Prostate gland (tissue), 2 donors: ENCODE measurements at regions of chr12 and their contacts with region 1.

Region 1: DNA sequence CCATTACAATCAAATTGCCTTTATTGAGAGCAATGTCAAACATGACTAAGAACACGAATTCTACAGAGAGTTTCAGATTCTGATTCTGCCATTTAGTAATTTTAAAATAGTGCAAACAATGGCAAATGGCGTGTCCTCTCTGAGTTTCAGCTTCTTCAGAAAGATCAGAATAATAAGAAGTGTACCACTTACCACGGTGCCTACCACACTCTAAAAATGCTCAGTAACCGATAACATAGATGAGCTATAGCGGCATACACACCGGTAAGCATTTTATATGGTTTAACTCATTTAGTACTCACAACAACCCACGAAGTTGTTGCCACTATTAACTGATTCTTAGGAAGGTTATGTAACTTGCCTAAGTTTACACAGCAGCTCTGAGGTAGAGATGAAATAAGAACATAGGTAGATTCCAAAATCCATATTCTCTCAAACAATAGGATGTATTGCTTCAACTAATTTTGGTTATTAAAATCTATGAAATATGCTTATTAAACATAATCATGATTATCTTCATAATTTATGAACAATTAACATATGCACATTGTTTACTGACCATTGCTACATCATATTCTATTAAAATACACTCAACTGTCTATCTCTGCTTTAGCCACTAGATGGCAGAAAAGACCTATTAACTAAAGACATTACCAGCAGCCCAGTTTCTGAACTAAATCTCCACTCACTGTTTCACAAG is 38.3 kb downstream of the SLC6A15 start:
- DNase-seq: no peak
- H3K4me3 ChIP-seq: no peak overlapping the region
- H3K27ac ChIP-seq: no peak overlapping the region
- H3K4me1 ChIP-seq: no peaks in the 10 kb centered on the region
- H3K27me3 ChIP-seq: no peaks in the 10 kb centered on the region
- CTCF ChIP-seq: peak; percentile 56 to 82 (median 76)
- POLR2A ChIP-seq: no peak

Region 2: GRCh38 chr12:85029456-85029855 is 155.2 kb after region 1 on chr12:
- intact Hi-C with region 1: loop called (anchors 2 kb)
- DNase-seq: no peak
- H3K4me3 ChIP-seq: no peak overlapping the region
- H3K27ac ChIP-seq: no peak overlapping the region
- H3K4me1 ChIP-seq: no peaks in the 10 kb centered on the region
- H3K27me3 ChIP-seq: no peaks in the 10 kb centered on the region
- CTCF ChIP-seq: peak in 3 of 4 experiments; percentile 52 to 58 (median 54)
- POLR2A ChIP-seq: no peak